Cardiac septum (tissue), 1 donor: ENCODE measurements at regions of chr22 and their contacts with region 1.

Region 1: DNA sequence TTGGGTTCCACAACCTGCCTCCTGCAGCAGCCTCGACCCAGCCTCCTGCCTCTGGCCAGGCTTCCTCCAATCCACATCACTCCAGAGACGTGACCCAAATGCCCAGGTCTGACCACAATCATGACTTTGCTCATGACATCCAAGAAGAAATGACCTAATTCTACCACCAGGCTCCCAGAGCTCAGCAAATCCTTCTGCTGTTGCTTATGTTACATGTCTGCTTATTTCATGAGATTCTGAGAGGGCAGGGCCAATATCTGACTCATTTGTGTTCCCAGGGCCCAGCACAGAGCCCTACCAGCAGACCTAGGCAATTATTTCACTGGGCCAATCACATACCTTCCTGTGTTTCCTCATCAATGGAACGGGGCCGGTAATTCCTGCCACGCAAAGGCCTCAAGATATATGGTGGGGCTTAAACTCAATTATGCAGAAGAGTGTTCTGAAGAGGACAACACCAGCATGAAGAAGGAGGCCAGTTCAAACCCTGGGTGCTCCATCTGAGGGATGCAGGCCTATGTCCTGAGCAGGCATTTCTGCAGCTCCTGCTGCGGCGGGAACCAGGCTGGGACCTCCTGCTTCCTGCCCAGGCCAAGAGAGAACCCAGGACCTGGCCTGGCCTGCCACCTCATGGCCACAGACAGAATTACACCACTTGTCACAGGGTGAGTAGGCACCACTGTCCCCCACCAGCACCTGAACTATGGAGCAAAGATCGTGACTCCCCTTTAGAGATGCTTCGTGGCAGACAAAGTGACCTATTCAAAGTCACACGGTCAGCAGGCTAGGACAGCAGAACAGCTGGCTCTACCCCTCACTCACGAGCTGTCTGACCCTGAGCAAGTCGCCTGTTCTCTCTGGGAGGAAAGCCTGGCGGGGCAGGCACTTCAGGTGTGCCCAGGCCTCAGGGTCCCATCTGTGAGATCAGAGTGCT is 5.9 kb downstream of the CENPM start:
- DNase-seq: peak; percentile 88

Region 2: DNA sequence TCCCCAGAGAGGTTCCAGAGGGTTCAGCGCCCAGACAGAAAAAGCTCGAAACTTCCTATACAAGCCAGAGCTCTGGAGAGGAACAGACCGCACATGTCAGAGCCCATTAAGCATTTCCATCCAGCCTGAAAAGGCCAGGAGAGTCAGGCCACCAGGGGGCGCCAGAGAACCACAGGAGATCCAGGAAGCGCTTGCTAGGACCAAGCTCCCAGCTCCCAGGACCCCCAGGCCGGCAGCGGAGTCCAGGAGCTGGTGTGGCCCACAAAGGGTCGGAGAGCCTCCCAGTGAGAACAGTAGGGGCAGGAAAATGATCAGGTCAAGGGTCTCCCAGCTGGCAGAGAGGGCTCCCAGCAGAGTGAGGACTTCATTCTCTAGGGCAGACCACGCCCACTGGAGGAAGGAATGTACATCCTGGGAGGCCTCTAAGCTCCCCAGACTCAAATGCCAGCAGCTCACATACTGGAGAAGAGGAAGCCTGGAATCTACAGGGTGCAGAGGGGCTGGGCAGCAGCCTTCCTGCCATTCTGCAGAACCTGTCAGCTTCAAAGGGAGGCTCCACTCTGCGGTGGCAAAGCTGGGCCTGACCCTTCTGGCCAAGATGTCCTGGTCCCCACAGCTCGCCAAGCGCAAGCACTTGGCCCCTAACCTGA is 243.8 kb before region 1 on chr22:
- intact Hi-C with region 1: loop called (anchors 1 kb)
- DNase-seq: peak; percentile 92

Region 3: GRCh38 chr22:41746567-41747400 is 194.3 kb before region 1 on chr22:
- intact Hi-C with region 1: loop called (anchors 2 kb)
- DNase-seq: peak; percentile 78

Region 4: GRCh38 chr22:41822317-41823060 is 118.6 kb before region 1 on chr22:
- intact Hi-C with region 1: loop called (anchors 1 kb)
- DNase-seq: no peak

Region 5: DNA sequence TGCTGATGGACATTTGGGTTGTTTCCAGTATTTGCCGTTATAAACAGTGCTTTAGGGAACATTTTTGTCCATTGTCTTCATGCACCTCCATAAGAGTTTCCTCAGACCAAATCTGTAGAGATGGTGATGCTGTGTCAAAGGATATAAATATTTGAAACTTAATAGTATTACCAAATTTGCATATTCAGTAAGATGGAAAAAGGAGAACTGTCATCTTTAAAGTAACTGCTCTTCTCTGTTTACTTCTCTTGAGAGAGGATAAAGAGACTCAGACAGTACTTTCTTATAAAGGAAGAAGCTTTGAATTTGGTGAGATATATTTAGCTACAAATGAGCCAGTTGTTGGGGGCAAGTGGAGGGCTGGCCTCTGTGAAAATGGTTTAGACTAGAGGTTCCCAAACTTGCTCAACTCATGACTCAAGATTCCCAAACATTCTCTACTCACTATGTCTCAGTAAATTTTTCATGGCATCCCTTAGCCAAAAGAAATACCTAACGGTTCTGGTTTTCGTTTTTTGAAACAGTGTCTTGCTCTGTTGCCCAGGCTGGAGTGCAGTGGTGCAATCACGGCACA is 52.4 kb before region 1 on chr22:
- intact Hi-C with region 1: no loop called
- DNase-seq: no peak

Region 6: GRCh38 chr22:41902932-41903421 is 38.1 kb before region 1 on chr22:
- intact Hi-C with region 1: loop called (anchors 5 kb)
- DNase-seq: peak; percentile 84